A549 (cell line): ENCODE measurements at regions of chr7 and their contacts with region 1.

Region 1: GRCh38 chr7:104883718-104884452 is 130.1 kb upstream of the KMT2E start:
- DNase-seq: peak; percentile 87 to 91
- ATAC-seq: peak; percentile 93 to 99
- H3K4me3 ChIP-seq: no peak overlapping the region
- H3K27ac ChIP-seq: 0 out of 6 replicates have a peak overlapping the region, but pooled peaks of 1 of the 2 experiments have one; percentile 14
- H3K4me1 ChIP-seq: 0 out of 3 replicates have a peak, but pooled peaks cover 4% of the 10 kb centered on the region
- CTCF ChIP-seq: peak; percentile 70
- EP300 ChIP-seq: no peak
- POLR2A ChIP-seq: no peak
- RAD21 ChIP-seq: peak; percentile 50 to 65; a peak in 4 of 5 replicates

Region 2: GRCh38 chr7:104855861-104856260 is 28.0 kb before region 1 on chr7:
- CTCF ChIA-PET with region 1: interaction called, 17 read pairs
- POLR2A ChIA-PET with region 1: no interaction called
- DNase-seq: no peak
- ATAC-seq: no peak
- H3K4me3 ChIP-seq: no peak overlapping the region
- H3K27ac ChIP-seq: no peak overlapping the region
- H3K4me1 ChIP-seq: no peaks in the 10 kb centered on the region
- CTCF ChIP-seq: no peak
- EP300 ChIP-seq: no peak
- POLR2A ChIP-seq: no peak
- RAD21 ChIP-seq: no peak

Region 3: GRCh38 chr7:104895522-104896236 is 11.8 kb after region 1 on chr7:
- CTCF ChIA-PET with region 1: interaction called, 53 read pairs
- POLR2A ChIA-PET with region 1: no interaction called
- DNase-seq: no peak
- ATAC-seq: no peak
- H3K4me3 ChIP-seq: no peak overlapping the region
- H3K27ac ChIP-seq: no peak overlapping the region
- H3K4me1 ChIP-seq: no peaks in the 10 kb centered on the region
- CTCF ChIP-seq: no peak
- EP300 ChIP-seq: no peak
- POLR2A ChIP-seq: no peak
- RAD21 ChIP-seq: no peak

Region 4: GRCh38 chr7:104914421-104914820 is 30.5 kb after region 1 on chr7:
- CTCF ChIA-PET with region 1: interaction called, 66 read pairs
- POLR2A ChIA-PET with region 1: no interaction called
- DNase-seq: no peak
- ATAC-seq: peak in 1 of 2 experiments; percentile 29; a peak in 1 of 6 replicates
- H3K4me3 ChIP-seq: no peak overlapping the region
- H3K27ac ChIP-seq: no peak overlapping the region
- H3K4me1 ChIP-seq: no peaks in the 10 kb centered on the region
- CTCF ChIP-seq: no peak
- EP300 ChIP-seq: no peak
- POLR2A ChIP-seq: no peak
- RAD21 ChIP-seq: no peak